Sciatic nerve (tissue), 2 donors: ENCODE measurements at regions of chr3 and their contacts with region 1.

Region 1: DNA sequence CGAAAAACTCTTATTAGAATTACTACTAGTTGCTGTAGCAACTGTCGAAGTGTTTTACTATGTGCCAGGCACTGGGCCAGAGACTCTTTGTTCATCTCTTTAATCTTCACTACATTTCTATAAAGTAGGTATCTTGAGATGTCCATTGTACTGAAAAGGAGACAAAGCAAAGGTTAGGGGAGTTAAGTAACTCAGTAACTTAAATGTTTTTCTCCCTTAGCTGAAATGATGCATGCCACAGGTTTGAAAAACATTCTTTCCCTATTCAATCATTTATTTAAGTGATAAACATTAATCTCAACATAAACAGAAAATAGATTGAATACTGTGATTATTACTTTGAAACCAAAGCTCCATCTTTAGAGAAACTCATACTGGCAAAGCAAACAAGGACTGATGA is 776.2 kb downstream of the FHIT start:
- DNase-seq: no peak
- ATAC-seq: no peak

Region 2: DNA sequence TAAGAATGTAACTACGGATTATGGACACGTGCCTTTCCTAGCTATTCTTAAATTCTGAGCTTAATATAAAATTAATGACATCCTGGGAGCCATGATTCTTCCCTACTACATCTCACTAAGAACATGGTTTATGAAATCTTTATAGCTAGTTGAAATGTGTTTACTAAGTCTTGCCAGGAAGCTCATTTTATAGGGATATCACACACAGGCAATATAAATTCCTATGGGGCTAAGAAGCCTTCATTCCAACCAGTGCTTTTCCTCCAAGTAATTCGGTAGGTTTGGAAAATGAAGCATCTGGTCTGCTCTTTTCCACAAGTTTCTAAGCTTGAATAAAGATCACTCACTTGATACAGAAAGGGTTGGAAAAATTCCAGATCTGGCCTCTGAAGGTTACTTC is 26.4 kb before region 1 on chr3:
- intact Hi-C with region 1: loop called (anchors 1 kb)
- DNase-seq: no peak
- ATAC-seq: no peak

Region 3: GRCh38 chr3:60513241-60513640 is 38.1 kb after region 1 on chr3:
- intact Hi-C with region 1: loop called (anchors 1 kb)
- DNase-seq: no peak
- ATAC-seq: no peak